ENCODE measurements at regions of chr12 and their contacts with region 1.

Region 1: DNA sequence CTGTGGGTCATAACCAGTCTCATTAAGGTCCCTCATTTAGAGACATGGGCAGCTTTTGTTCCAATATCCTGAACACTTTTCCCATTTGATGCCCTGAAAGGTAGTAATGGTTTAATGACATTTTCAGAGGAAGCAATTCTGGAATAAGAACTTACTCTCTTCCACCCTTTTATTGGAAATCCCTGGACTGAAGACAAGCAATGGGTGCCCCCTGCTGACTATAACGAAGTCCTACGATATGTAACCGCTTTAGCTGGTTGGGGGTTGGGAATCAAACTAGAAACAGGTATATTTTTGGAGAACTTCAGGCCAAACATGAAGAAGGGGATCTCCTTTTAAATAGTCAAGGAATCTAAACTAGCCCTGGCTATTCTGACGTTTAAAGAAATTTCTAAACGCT is 20.5 kb downstream of the SARNP start:
- DNase-seq: no peak
- H3K4me3 ChIP-seq: no peak overlapping the region
- H3K27ac ChIP-seq: no peak overlapping the region
- H3K4me1 ChIP-seq: peaks cover 9% of the 10 kb centered on the region
- H3K27me3 ChIP-seq: no peaks in the 10 kb centered on the region
- CTCF ChIP-seq: peak in 2 of 3 experiments; percentile 30 to 43
- POLR2A ChIP-seq: no peak

Region 2: GRCh38 chr12:55262587-55262986 is 534.5 kb before region 1 on chr12:
- intact Hi-C with region 1: no loop called
- DNase-seq: no peak
- H3K4me3 ChIP-seq: no peak overlapping the region
- H3K27ac ChIP-seq: no peak overlapping the region
- H3K4me1 ChIP-seq: no peaks in the 10 kb centered on the region
- H3K27me3 ChIP-seq: no peaks in the 10 kb centered on the region
- CTCF ChIP-seq: no peak
- POLR2A ChIP-seq: no peak

Region 3: GRCh38 chr12:55659486-55660385 is 137.3 kb before region 1 on chr12:
- intact Hi-C with region 1: loop called (anchors 10 kb)
- DNase-seq: no peak
- H3K4me3 ChIP-seq: no peak overlapping the region
- H3K27ac ChIP-seq: no peak overlapping the region
- H3K4me1 ChIP-seq: no peaks in the 10 kb centered on the region
- H3K27me3 ChIP-seq: no peaks in the 10 kb centered on the region
- CTCF ChIP-seq: no peak
- POLR2A ChIP-seq: no peak

Region 4: GRCh38 chr12:55743116-55743921 is 53.7 kb before region 1 on chr12 and contains the start of gene GDF11:
- intact Hi-C with region 1: loop called (anchors 10 kb)
- DNase-seq: no peak
- H3K4me3 ChIP-seq: peak within 1 kb of the TSS; percentile 59 to 63
- H3K27ac ChIP-seq: peak within 1 kb of the TSS; percentile 80
- H3K4me1 ChIP-seq: peaks cover 38% of the 10 kb centered on the region
- H3K27me3 ChIP-seq: no peaks in the 10 kb centered on the region
- CTCF ChIP-seq: no peak
- POLR2A ChIP-seq: peak in 1 of 2 donors; percentile 11
- total RNA-seq, gene GDF11: 7.6 TPM

Region 5: GRCh38 chr12:55828357-55828756 is 31.3 kb after region 1 on chr12:
- intact Hi-C with region 1: no loop called
- DNase-seq: no peak
- H3K4me3 ChIP-seq: peak overlapping the region; percentile 79 to 87
- H3K27ac ChIP-seq: peak overlapping the region; percentile 91
- H3K4me1 ChIP-seq: peaks cover 73% of the 10 kb centered on the region
- H3K27me3 ChIP-seq: no peaks in the 10 kb centered on the region
- CTCF ChIP-seq: no peak
- POLR2A ChIP-seq: no peak

Region 6: DNA sequence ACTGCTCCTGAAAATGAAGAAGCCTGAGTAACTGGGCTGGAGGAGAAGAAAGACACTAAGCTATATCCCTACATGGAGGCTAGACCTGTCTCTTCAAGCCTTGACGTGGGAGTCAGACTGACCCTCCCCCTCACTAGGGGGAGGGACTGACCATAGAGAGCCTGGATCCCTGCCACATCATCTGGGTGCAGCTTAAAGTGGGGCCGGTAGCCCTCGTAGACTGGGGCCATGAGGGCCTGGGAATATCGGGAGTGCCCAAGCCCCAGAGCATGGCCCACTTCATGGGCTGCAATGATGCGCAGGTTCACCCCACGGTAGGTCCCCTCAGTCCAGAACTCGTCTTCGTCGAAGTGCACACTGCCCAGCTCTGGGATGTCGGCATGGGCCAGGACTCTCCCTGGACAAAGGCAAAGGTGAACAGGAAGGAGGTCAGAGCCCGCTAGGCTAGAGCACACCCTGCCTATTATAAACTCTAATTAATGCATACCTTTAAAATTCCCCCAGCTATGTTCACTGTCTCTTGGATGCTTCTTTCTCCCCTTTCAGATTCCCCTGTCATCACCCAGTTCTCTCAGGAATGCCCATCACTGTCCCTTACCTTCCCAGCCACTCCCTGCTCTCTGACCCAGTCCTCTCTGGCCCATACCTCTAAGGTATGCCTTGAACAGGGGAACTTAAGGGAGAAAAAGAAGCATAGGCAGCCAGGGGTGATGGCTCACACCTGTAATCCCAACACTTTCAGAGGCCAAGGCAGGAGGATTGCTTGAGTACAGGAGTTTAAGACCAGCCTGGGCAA is 42.5 kb after region 1 on chr12:
- intact Hi-C with region 1: no loop called
- DNase-seq: no peak
- H3K4me3 ChIP-seq: no peak overlapping the region
- H3K27ac ChIP-seq: no peak overlapping the region
- H3K4me1 ChIP-seq: peaks cover 16% of the 10 kb centered on the region
- H3K27me3 ChIP-seq: no peaks in the 10 kb centered on the region
- CTCF ChIP-seq: no peak
- POLR2A ChIP-seq: no peak

Measured in vagina (tissue), 2 donors.